GM13977 (cell line): ENCODE measurements at regions of chr11 and their contacts with region 1.

Region 1: DNA sequence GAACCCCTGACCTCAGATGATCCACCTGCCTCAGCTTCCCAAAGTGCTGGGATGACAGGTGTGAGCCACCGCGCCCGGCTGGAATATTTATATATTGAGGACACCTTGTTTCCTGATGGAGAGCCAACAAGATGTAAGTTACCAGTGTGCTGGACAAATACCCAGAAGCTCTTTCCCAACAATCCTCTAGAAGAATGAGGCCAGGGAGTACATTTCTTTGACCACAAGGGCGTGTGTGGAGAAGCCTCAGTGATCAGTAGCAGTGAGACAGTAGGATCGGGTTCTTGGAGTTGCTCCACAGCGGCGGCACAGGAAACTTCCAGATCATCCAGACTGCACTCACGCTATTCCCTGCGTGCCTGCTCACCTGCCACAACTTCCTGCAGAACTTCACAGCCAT is 10.3 kb upstream of the POLA2 start:
- DNase-seq: no peak
- CTCF ChIP-seq: no peak

Region 2: DNA sequence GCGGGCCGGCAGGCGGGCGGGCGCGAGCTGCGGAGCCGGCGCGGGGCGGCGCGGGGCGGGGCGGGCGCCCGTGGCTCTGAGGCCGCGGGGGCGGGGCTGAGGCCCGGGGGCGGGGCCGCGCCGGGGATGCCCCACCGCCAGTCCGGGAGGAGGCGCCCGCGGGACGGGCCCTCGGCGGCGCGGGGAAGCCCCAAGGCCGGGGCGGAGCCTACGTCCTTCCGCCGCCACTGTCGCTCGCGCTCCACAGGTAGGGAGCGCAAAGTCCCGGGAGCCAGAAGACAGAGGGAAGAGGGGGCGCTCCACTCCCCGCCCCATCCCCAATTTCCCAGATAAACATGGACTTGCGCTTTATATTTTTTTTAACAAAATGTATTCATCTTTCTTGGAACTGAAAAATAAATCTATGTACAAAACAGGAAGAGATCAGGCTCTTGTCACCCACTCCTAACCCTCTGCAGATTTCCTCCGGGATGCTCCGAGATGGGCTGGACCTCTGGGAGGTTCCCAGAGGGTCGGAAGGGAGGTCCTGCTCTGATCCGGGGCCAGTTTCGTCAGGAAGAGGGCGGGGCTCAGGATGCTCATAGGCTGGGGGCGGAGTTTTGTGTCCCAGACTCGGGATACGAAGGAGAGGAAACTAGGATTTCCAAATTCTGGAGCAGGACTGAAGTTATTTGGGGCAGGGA is 448.2 kb before region 1 on chr11 and contains the start of gene MAP4K2:
- in situ Hi-C with region 1: no loop called
- DNase-seq: peak; percentile 99
- CTCF ChIP-seq: peak; percentile 27

Region 3: GRCh38 chr11:65204646-65205601 is 46.6 kb before region 1 on chr11:
- in situ Hi-C with region 1: loop called (anchors 10 kb)
- DNase-seq: peak; percentile 83
- CTCF ChIP-seq: peak; percentile 86

Region 4: GRCh38 chr11:65802841-65803240 is 551.4 kb after region 1 on chr11:
- in situ Hi-C with region 1: no loop called
- DNase-seq: peak; percentile 79
- CTCF ChIP-seq: no peak